ENCODE measurements at regions of chr13 and their contacts with region 1.

Region 1: GRCh38 chr13:32310134-32310706 is 4.9 kb downstream of the ZAR1L start:
- DNase-seq: peak; percentile 54
- ATAC-seq: peak; percentile 88
- H3K4me3 ChIP-seq: no peak overlapping the region
- H3K27ac ChIP-seq: no peak overlapping the region
- H3K4me1 ChIP-seq: peaks cover 4 to 12% of the 10 kb centered on the region in 2 experiments; a peak in 3 of 4 replicates
- H3K27me3 ChIP-seq: no peaks in the 10 kb centered on the region
- CTCF ChIP-seq: peak; percentile 56 to 75 (median 63)
- POLR2A ChIP-seq: no peak
- RAD21 ChIP-seq: peak; percentile 61

Region 2: DNA sequence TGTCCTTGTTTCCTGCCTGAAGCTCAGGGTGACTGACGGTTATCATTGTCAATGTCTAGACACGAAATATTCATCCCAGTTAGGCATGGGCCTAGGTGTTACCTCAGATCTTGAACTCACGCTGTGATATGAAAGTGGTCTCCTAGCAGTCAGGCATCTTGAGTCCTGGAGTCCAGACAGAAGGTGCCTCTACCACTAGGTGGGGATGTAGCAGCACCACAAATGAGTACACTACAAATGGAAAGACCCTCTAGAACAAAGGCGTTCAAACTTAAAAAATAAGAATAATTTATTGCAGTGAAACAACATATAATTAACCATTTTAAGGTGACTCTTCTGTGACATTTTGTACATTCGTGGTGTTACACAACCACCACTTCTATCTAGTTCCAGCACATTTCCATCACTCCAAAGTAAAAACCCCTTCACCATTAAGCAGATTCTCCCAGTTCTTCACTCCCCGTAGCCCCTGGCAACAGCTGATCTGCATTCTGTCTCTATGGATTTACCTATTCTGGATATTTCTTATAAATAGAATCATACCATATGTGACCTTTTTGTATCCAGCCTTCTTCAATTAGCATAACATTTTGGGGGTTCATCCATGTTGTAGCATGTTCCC is 290.5 kb before region 1 on chr13:
- CTCF ChIA-PET with region 1: no interaction called
- POLR2A ChIA-PET with region 1: no interaction called
- RAD21 ChIA-PET with region 1: no interaction called
- intact Hi-C with region 1: loop called (anchors 1 kb)
- DNase-seq: peak; percentile 37
- ATAC-seq: peak; percentile 90
- H3K4me3 ChIP-seq: no peak overlapping the region
- H3K27ac ChIP-seq: no peak overlapping the region
- H3K4me1 ChIP-seq: no peaks in the 10 kb centered on the region
- H3K27me3 ChIP-seq: no peaks in the 10 kb centered on the region
- CTCF ChIP-seq: peak; percentile 37 to 78 (median 78); a peak in 5 of 6 replicates
- POLR2A ChIP-seq: no peak
- RAD21 ChIP-seq: peak; percentile 61

Region 3: DNA sequence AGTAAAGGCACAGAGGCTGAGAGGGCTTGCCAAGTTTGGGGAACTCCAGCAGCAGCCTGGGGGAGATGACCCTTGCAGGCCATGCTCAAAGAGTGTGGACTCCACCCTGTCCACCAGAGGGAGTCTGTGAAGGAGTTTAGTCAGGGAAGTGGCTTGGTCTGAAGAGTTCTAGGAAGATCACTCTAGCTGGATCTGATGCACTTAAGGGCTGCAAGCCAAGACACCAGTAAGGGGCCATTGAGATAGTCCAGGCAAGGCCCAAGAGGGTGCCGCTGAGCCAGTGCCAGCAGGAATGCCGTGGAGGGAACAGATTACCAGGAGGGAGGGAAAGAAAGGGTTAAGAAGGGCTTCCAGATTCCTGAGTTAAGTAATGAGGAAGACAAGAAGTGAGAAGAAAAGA is 63.8 kb before region 1 on chr13:
- CTCF ChIA-PET with region 1: no interaction called
- POLR2A ChIA-PET with region 1: no interaction called
- RAD21 ChIA-PET with region 1: no interaction called
- intact Hi-C with region 1: loop called (anchors 1 kb)
- DNase-seq: peak; percentile 66
- ATAC-seq: peak; percentile 100
- H3K4me3 ChIP-seq: no peak overlapping the region
- H3K27ac ChIP-seq: no peak overlapping the region
- H3K4me1 ChIP-seq: peaks cover 0 to 5% of the 10 kb centered on the region in 2 experiments; a peak in 1 of 4 replicates
- H3K27me3 ChIP-seq: no peaks in the 10 kb centered on the region
- CTCF ChIP-seq: peak; percentile 49 to 89 (median 79); a peak in 5 of 6 replicates
- POLR2A ChIP-seq: no peak
- RAD21 ChIP-seq: peak; percentile 53

Region 4: GRCh38 chr13:32259116-32259515 is 51.1 kb before region 1 on chr13:
- CTCF ChIA-PET with region 1: no interaction called
- POLR2A ChIA-PET with region 1: no interaction called
- RAD21 ChIA-PET with region 1: no interaction called
- intact Hi-C with region 1: loop called (anchors 5 kb)
- DNase-seq: no peak
- ATAC-seq: peak; percentile 79
- H3K4me3 ChIP-seq: no peak overlapping the region
- H3K27ac ChIP-seq: no peak overlapping the region
- H3K4me1 ChIP-seq: peaks cover 8 to 11% of the 10 kb centered on the region in 2 experiments; a peak in 3 of 4 replicates
- H3K27me3 ChIP-seq: no peaks in the 10 kb centered on the region
- CTCF ChIP-seq: peak in 2 of 3 experiments; percentile 42 to 51; a peak in 3 of 6 replicates
- POLR2A ChIP-seq: no peak
- RAD21 ChIP-seq: no peak

Region 5: GRCh38 chr13:32267836-32268439 is 42.3 kb before region 1 on chr13:
- CTCF ChIA-PET with region 1: interaction called, 3 read pairs
- POLR2A ChIA-PET with region 1: interaction called, 5 read pairs
- RAD21 ChIA-PET with region 1: no interaction called
- intact Hi-C with region 1: loop called (anchors 1 kb)
- DNase-seq: peak; percentile 51
- ATAC-seq: peak; percentile 99
- H3K4me3 ChIP-seq: no peak overlapping the region
- H3K27ac ChIP-seq: no peak overlapping the region
- H3K4me1 ChIP-seq: peaks cover 2 to 9% of the 10 kb centered on the region in 2 experiments; a peak in 1 of 4 replicates
- H3K27me3 ChIP-seq: no peaks in the 10 kb centered on the region
- CTCF ChIP-seq: peak; percentile 40 to 97 (median 96); a peak in 5 of 6 replicates
- POLR2A ChIP-seq: no peak
- RAD21 ChIP-seq: peak; percentile 53

Measured in HCT116 (cell line).